Heart left ventricle (tissue), 16 donors: ENCODE measurements at regions of chr5 and their contacts with region 1.

Region 1: GRCh38 chr5:32419791-32420190 is 24.7 kb downstream of the ZFR start:
- DNase-seq: peak in 3 of 5 donors; percentile 12 to 55 (median 40)
- ATAC-seq: peak; percentile 74 to 86 (median 81)
- H3K4me3 ChIP-seq: no peak overlapping the region
- H3K27ac ChIP-seq: peak overlapping the region in 1 of 12 donors; percentile 38
- H3K4me1 ChIP-seq: peaks cover 0 to 44% (median 28%) of the 10 kb centered on the region in 12 donors
- H3K27me3 ChIP-seq: no peaks in the 10 kb centered on the region
- CTCF ChIP-seq: no peak
- POLR2A ChIP-seq: no peak

Region 2: GRCh38 chr5:32369542-32370155 is 50.1 kb before region 1 on chr5:
- intact Hi-C with region 1: loop called in 1 of 10 experiments (anchors 10 kb)
- DNase-seq: no peak
- ATAC-seq: no peak
- H3K4me3 ChIP-seq: no peak overlapping the region
- H3K27ac ChIP-seq: no peak overlapping the region
- H3K4me1 ChIP-seq: no peaks in the 10 kb centered on the region
- H3K27me3 ChIP-seq: no peaks in the 10 kb centered on the region
- CTCF ChIP-seq: no peak
- POLR2A ChIP-seq: no peak